Gastrocnemius medialis (tissue), 4 donors: ENCODE measurements at regions of chr6 and their contacts with region 1.

Region 1: DNA sequence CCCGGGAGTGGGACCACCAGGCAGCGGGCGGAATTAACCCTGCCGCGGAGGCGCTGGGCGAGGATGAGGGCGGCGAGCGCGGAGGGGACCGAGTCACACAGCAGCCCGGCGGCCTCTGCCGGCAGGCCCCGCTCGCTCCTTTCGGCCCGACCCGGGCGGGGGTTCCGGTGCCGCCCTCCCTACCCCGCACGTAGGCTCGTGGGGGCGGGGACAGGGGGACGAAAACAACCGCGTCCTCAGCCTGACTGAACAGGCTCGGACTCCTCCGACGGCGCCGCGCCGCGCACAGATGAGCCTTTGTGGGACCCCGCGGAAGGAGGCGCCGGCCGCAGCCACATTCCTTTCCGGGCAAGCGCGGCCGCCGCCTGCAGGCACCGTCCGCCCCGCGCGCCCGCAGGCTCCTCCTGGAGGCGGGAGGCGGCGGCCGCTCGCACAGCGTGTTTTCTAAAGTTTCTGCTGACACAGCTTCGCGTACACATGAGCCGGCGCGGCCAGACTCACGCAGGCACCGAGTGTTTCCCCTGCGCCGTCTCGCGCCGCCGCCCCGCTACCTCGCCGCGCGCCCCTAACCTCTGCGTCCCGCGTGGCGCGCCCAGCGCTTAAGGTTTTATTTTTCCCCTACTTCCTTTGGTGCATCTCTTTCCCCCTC is 244.3 kb downstream of the ARID1B start:
- DNase-seq: peak; percentile 91
- ATAC-seq: peak; percentile 76 to 80
- H3K4me3 ChIP-seq: peak overlapping the region; percentile 81 to 94 (median 86)
- H3K27ac ChIP-seq: peak overlapping the region; percentile 97 to 100 (median 98)
- H3K4me1 ChIP-seq: peaks cover 50 to 57% of the 10 kb centered on the region in 2 donors
- H3K27me3 ChIP-seq: no peaks in the 10 kb centered on the region
- CTCF ChIP-seq: peak; percentile 26 to 53 (median 48)
- POLR2A ChIP-seq: peak; percentile 94 to 98

Region 2: GRCh38 chr6:155314092-155314772 is 1707.2 kb before region 1 on chr6 and contains the start of gene TFB1M:
- in situ Hi-C with region 1: no loop called
- intact Hi-C with region 1: loop called (anchors 10 kb)
- DNase-seq: peak; percentile 98
- ATAC-seq: peak; percentile 90 to 91
- H3K4me3 ChIP-seq: peak within 1 kb of the TSS; percentile 84 to 95 (median 88)
- H3K27ac ChIP-seq: peak within 1 kb of the TSS; percentile 87 to 93 (median 91)
- H3K4me1 ChIP-seq: peaks cover 3 to 11% of the 10 kb centered on the region in 2 donors
- H3K27me3 ChIP-seq: no peaks in the 10 kb centered on the region
- CTCF ChIP-seq: no peak
- POLR2A ChIP-seq: peak; percentile 94
- total RNA-seq, gene TFB1M: 13.4 to 34.4 (median 29.2) TPM

Region 3: DNA sequence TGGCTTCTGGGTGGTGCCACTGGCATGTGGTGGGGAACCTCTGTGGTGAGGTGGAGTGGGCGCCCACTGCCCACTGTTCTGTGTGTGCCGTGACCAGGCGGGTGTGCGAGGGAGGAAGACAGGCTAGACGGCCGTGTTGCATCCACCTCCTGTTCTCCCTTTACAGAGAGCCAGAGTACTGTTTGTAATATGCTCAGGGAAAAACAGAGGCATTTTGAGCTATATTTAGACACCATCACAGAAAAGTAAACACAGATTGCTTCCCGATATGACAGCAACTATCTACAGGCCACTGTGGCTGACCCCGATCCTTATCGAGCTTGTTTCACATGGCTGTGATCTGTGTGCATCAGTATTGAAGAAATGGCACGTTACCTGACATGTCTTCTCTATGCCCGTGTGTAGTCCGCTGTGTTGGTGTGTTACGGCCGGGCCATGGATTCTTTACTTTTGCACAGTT is 198.7 kb before region 1 on chr6:
- in situ Hi-C with region 1: no loop called
- intact Hi-C with region 1: loop called (anchors 5 kb)
- DNase-seq: peak; percentile 39 to 52
- ATAC-seq: peak; percentile 65 to 83
- H3K4me3 ChIP-seq: peak overlapping the region; percentile 20 to 50 (median 36)
- H3K27ac ChIP-seq: peak overlapping the region; percentile 89 to 95 (median 91)
- H3K4me1 ChIP-seq: peaks cover 79 to 81% of the 10 kb centered on the region in 2 donors
- H3K27me3 ChIP-seq: no peaks in the 10 kb centered on the region
- CTCF ChIP-seq: no peak
- POLR2A ChIP-seq: peak; percentile 12 to 66

Region 4: DNA sequence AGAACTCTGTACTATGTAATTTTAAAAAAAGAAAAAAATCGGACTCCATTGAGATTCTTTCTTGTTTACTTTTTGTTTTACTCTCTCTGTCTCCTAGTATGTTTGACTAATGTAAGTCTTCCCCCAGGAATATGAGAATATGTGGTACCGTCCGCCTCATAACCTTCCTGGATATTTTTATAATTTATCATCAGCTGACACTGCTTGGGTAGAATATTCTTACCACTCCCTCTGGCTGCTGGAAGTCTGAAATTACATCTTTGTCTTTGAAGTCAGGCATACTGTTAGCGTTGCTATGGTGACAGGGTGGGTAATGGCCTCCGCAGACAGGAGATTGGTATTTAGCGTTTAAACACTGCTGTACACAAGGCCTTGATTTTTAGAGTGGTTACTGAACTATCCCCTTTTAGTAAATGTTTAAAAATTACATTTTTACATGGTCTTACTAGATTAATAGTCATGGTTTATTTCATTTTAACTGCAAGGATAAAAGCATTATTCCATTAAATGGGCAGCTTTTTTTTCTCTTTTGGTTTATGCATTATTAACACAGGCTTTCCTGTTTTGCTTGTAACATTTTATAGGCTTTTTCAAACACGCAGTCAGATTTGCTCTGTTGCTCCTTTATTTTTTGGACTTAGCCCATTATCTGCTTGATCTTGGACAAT is 67.9 kb before region 1 on chr6:
- in situ Hi-C with region 1: loop called in 1 of 4 experiments (anchors 5 kb)
- intact Hi-C with region 1: loop called (anchors 1 kb)
- DNase-seq: peak; percentile 62 to 76
- ATAC-seq: peak; percentile 81 to 84
- H3K4me3 ChIP-seq: peak overlapping the region in 3 of 4 donors; percentile 1 to 19 (median 7)
- H3K27ac ChIP-seq: peak overlapping the region; percentile 81 to 92 (median 88)
- H3K4me1 ChIP-seq: peaks cover 90 to 92% of the 10 kb centered on the region in 2 donors
- H3K27me3 ChIP-seq: no peaks in the 10 kb centered on the region
- CTCF ChIP-seq: peak in 4 of 5 experiments; percentile 17 to 42 (median 30)
- POLR2A ChIP-seq: peak in 1 of 2 donors; percentile 75

Region 5: DNA sequence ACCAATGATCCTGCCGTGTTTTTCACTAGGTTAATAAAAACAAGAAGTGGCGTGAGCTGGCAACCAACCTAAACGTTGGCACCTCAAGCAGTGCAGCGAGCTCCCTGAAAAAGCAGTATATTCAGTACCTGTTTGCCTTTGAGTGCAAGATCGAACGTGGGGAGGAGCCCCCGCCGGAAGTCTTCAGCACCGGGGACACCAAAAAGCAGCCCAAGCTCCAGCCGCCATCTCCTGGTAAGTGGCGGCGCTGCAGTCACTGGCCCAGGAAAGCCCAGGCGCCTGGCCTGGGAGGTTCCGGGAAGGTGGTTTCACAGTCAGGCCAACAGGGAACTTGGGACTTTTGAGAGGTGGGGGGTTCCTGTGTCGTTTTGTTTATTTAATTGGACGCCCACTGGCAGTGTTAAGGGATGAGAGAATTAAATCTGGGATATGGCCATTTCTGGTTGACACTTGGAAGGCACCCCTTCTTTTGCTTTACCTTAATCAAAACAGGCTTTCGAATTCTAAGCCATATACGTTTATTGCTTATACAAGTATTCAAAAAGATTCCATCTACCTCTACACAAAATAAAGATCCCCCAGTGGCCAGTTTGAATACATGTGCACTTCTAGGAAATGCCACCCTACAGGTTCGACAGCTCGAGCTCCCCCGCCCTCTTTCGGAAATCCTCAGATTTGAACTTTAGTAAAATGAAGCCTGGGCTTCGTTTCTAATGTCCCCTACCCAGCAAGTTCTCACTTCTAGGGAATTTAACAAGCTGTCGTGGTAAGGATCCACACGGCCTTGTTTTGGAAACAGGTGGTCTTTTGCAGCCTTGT is 162.9 kb after region 1 on chr6:
- in situ Hi-C with region 1: loop called in 1 of 4 experiments (anchors 25 kb)
- intact Hi-C with region 1: loop called (anchors 5 kb)
- DNase-seq: peak; percentile 41 to 65
- ATAC-seq: peak; percentile 22 to 40
- H3K4me3 ChIP-seq: no peak overlapping the region
- H3K27ac ChIP-seq: peak overlapping the region in 3 of 4 donors; percentile 9 to 46 (median 24)
- H3K4me1 ChIP-seq: peaks cover 26 to 27% of the 10 kb centered on the region in 2 donors
- H3K27me3 ChIP-seq: no peaks in the 10 kb centered on the region
- CTCF ChIP-seq: peak; percentile 83 to 92 (median 90)
- POLR2A ChIP-seq: no peak